ENCODE measurements at regions of chr6 and their contacts with region 1.

Region 1: DNA sequence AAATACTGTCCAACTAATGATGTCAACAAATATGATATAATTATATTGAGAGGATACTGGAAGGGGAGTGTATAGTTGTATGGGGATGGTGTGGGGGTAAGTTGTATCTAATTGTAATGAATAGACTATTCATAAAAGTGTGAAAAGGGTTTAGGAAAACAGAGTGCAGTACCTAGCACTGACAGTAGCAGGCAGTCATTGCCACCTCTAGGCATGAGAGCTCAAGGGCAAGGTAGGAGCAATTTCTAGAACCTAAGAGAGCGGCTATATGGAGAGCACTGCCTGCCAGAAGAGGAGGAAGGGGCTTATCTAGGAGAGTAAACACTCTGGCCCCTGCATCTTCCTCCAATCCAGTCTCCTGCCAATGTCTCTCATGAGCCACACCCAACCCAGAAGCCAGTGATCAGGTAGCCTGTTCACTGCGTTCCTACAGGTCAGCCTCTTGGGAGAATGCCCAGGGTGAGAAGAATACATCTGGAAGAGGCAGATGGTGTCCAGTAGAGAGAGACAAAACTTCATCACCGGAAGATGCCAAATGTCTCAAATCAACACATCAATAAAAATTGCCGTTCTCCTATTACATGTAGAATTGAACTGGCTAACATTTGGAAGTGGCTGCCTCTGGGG is 200.0 kb downstream of the LY86 start:
- DNase-seq: peak in 1 of 2 experiments; percentile 58
- H3K4me3 ChIP-seq: no peak overlapping the region
- H3K27ac ChIP-seq: no peak overlapping the region
- H3K4me1 ChIP-seq: no peaks in the 10 kb centered on the region; a peak in 1 of 7 replicates
- H3K27me3 ChIP-seq: no peaks in the 10 kb centered on the region
- CTCF ChIP-seq: peak; percentile 8 to 81 (median 69)
- EP300 ChIP-seq: no peak
- POLR2A ChIP-seq: no peak
- RAD21 ChIP-seq: peak; percentile 85 to 89

Region 2: DNA sequence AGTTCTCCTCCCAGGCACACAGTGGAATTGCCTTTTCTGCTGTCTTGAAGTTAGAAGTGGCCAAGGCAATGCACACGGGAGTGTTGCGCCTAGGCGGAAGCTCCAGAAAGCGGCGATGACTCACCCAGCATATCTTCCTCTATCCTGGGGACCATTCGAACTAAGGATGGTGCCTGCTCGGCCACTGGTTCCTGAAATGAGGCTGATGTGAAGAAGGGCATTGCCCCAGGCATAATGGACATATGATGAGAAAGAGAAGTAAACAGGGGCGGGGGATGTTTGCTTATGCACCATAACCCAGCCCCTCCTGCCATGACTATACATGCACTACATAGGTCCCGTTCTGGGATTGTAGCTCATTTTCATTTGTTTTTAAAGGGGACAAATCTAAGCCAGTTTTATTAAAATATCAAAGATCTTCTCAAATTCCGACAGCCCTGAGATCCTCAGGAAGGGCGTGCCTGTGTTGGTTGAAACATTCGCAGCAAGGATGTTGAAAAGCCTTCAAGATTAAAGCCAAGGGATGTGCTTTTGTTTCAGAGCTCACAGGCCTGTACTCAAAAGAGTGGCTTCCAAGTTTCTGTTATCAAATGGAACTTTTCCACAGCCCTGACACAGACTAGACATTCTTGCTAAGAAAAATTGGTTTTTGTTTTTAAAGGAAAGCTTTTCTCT is 18.5 kb after region 1 on chr6:
- CTCF ChIA-PET with region 1: interaction called, 11 read pairs
- POLR2A ChIA-PET with region 1: no interaction called
- DNase-seq: no peak
- H3K4me3 ChIP-seq: no peak overlapping the region
- H3K27ac ChIP-seq: no peak overlapping the region
- H3K4me1 ChIP-seq: peaks cover 2 to 4% (median 3%) of the 10 kb centered on the region in 4 experiments; a peak in 6 of 7 replicates
- H3K27me3 ChIP-seq: no peaks in the 10 kb centered on the region
- CTCF ChIP-seq: no peak
- EP300 ChIP-seq: no peak
- POLR2A ChIP-seq: no peak
- RAD21 ChIP-seq: no peak